ENCODE measurements at regions of chr18 and their contacts with region 1.

Region 1: GRCh38 chr18:62584241-62585120 is 61.7 kb downstream of the ZCCHC2 start:
- DNase-seq: peak; percentile 76
- ATAC-seq: peak; percentile 90
- H3K4me3 ChIP-seq: no peak overlapping the region
- H3K27ac ChIP-seq: no peak overlapping the region
- H3K4me1 ChIP-seq: peaks cover 0 to 8% of the 10 kb centered on the region in 2 experiments; a peak in 2 of 4 replicates
- H3K27me3 ChIP-seq: no peaks in the 10 kb centered on the region
- CTCF ChIP-seq: peak; percentile 96 to 99 (median 98)
- POLR2A ChIP-seq: no peak
- RAD21 ChIP-seq: peak; percentile 92

Region 2: GRCh38 chr18:62324917-62325805 is 259.3 kb before region 1 on chr18 and contains the start of gene TNFRSF11A:
- CTCF ChIA-PET with region 1: no interaction called
- POLR2A ChIA-PET with region 1: no interaction called
- RAD21 ChIA-PET with region 1: no interaction called
- intact Hi-C with region 1: loop called (anchors 1 kb)
- DNase-seq: no peak
- ATAC-seq: peak; percentile 94
- H3K4me3 ChIP-seq: peak within 1 kb of the TSS; percentile 61 to 70
- H3K27ac ChIP-seq: no peak within 1 kb of the TSS
- H3K4me1 ChIP-seq: peaks cover 5 to 12% of the 10 kb centered on the region in 2 experiments; a peak in 2 of 4 replicates
- H3K27me3 ChIP-seq: peaks cover 29% of the 10 kb centered on the region; the same call in 1 of the 2 replicates
- CTCF ChIP-seq: peak in 2 of 3 experiments; percentile 39 to 57; a peak in 4 of 6 replicates
- POLR2A ChIP-seq: peak; percentile 41
- RAD21 ChIP-seq: 0 out of 2 replicates have a peak, but pooled peaks have one; percentile 27
- total RNA-seq, gene TNFRSF11A: 3.2 TPM